ENCODE measurements at regions of chr14 and their contacts with region 1.

Region 1: GRCh38 chr14:32509632-32510187 is 180.6 kb downstream of the AKAP6 start:
- DNase-seq: peak; percentile 81 to 90
- ATAC-seq: peak; percentile 78
- H3K4me3 ChIP-seq: peak overlapping the region in 1 of 2 donors; percentile 11
- H3K27ac ChIP-seq: peak overlapping the region; percentile 1 to 98
- H3K4me1 ChIP-seq: peaks cover 0 to 6% of the 10 kb centered on the region in 2 donors
- H3K27me3 ChIP-seq: no peaks in the 10 kb centered on the region

Region 2: GRCh38 chr14:32224737-32225377 is 284.9 kb before region 1 on chr14:
- intact Hi-C with region 1: no loop called
- DNase-seq: peak in 1 of 2 donors; percentile 52
- ATAC-seq: peak; percentile 41
- H3K4me3 ChIP-seq: no peak overlapping the region
- H3K27ac ChIP-seq: no peak overlapping the region
- H3K4me1 ChIP-seq: peaks cover 4 to 5% of the 10 kb centered on the region in 2 donors
- H3K27me3 ChIP-seq: no peaks in the 10 kb centered on the region

Region 3: GRCh38 chr14:32430326-32430725 is 79.4 kb before region 1 on chr14:
- intact Hi-C with region 1: loop called (anchors 5 to 10 kb)
- DNase-seq: no peak
- ATAC-seq: no peak
- H3K4me3 ChIP-seq: no peak overlapping the region
- H3K27ac ChIP-seq: no peak overlapping the region
- H3K4me1 ChIP-seq: peaks cover 2 to 3% of the 10 kb centered on the region in 2 donors
- H3K27me3 ChIP-seq: no peaks in the 10 kb centered on the region

Region 4: GRCh38 chr14:32453857-32454810 is 55.6 kb before region 1 on chr14:
- intact Hi-C with region 1: no loop called
- DNase-seq: no peak
- ATAC-seq: no peak
- H3K4me3 ChIP-seq: no peak overlapping the region
- H3K27ac ChIP-seq: no peak overlapping the region
- H3K4me1 ChIP-seq: peaks cover 3 to 5% of the 10 kb centered on the region in 2 donors
- H3K27me3 ChIP-seq: no peaks in the 10 kb centered on the region